ENCODE measurements at regions of chr11 and their contacts with region 1.

Region 1: GRCh38 chr11:46346886-46347636 is at the start of gene DGKZ:
- DNase-seq: peak; percentile 99
- ATAC-seq: peak; percentile 93
- H3K4me3 Mint-ChIP-seq: peak within 1 kb of the TSS; percentile 90
- H3K27ac Mint-ChIP-seq: peak within 1 kb of the TSS; percentile 83
- H3K4me1 Mint-ChIP-seq: peaks cover 52% of the 10 kb centered on the region
- H3K27me3 Mint-ChIP-seq: no peaks in the 10 kb centered on the region
- CTCF ChIP-seq: no peak
- total RNA-seq, gene DGKZ: 48.1 and 53.6 TPM in 2 replicates

Region 2: GRCh38 chr11:46121724-46122477 is 225.2 kb before region 1 on chr11:
- CTCF ChIA-PET with region 1: no interaction called
- POLR2A ChIA-PET with region 1: no interaction called
- intact Hi-C with region 1: loop called (anchors 2 kb)
- DNase-seq: no peak
- ATAC-seq: peak; percentile 47
- H3K4me3 Mint-ChIP-seq: peak overlapping the region; percentile 87
- H3K27ac Mint-ChIP-seq: peak overlapping the region; percentile 91
- H3K4me1 Mint-ChIP-seq: peaks cover 30% of the 10 kb centered on the region
- H3K27me3 Mint-ChIP-seq: no peaks in the 10 kb centered on the region
- CTCF ChIP-seq: no peak

Region 3: GRCh38 chr11:46315033-46315738 is 31.9 kb before region 1 on chr11:
- CTCF ChIA-PET with region 1: interaction called, 6 read pairs
- POLR2A ChIA-PET with region 1: interaction called, 3 read pairs
- intact Hi-C with region 1: loop called (anchors 1 kb)
- DNase-seq: peak; percentile 48
- ATAC-seq: peak; percentile 67
- H3K4me3 Mint-ChIP-seq: no peak overlapping the region
- H3K27ac Mint-ChIP-seq: no peak overlapping the region
- H3K4me1 Mint-ChIP-seq: peaks cover 15% of the 10 kb centered on the region
- H3K27me3 Mint-ChIP-seq: peaks cover 11% of the 10 kb centered on the region
- CTCF ChIP-seq: peak; percentile 82

Region 4: GRCh38 chr11:46380340-46381047 is 33.4 kb after region 1 on chr11:
- CTCF ChIA-PET with region 1: no interaction called
- POLR2A ChIA-PET with region 1: no interaction called
- intact Hi-C with region 1: loop called (anchors 5 kb)
- DNase-seq: no peak
- ATAC-seq: peak; percentile 44
- H3K4me3 Mint-ChIP-seq: peak overlapping the region; percentile 80
- H3K27ac Mint-ChIP-seq: no peak overlapping the region
- H3K4me1 Mint-ChIP-seq: peaks cover 8% of the 10 kb centered on the region
- H3K27me3 Mint-ChIP-seq: peaks cover 24% of the 10 kb centered on the region
- CTCF ChIP-seq: no peak

Region 5: DNA sequence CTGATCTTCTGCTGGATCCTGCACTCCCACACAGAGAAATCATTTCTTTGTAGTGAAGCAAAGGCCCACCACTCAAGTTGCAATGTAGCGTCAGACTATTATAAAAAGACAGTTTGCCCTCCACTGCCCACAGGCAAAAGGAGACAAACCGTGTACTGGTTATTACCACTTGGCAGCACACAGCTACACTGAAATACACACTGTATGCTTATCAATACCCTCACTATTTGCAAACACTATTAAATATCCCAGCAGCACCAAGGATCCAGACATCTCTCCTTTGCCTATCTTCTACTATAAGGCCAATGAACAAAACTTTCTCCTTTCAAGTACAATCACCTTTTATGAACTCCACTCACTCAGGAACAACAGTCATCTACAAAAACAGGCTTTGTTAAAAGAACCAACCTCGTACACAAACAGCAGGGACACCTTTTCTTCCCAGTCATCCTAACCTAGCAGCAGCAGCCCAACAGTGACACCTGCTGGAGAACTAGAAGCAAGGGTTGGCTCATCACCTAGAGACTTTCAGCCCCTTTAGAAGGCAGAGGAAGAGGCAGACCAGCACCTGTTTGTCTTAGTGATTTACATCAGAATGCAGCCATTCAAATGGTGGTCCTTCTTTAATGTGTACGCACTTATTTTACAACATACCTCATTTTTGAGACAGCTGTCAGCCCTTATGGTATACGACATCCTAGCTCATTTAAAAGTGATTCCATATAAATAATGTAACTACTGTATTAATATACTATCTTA is 190.7 kb after region 1 on chr11:
- CTCF ChIA-PET with region 1: no interaction called
- POLR2A ChIA-PET with region 1: no interaction called
- intact Hi-C with region 1: loop called (anchors 5 kb)
- DNase-seq: no peak
- ATAC-seq: peak; percentile 68
- H3K4me3 Mint-ChIP-seq: no peak overlapping the region
- H3K27ac Mint-ChIP-seq: no peak overlapping the region
- H3K4me1 Mint-ChIP-seq: peaks cover 13% of the 10 kb centered on the region
- H3K27me3 Mint-ChIP-seq: no peaks in the 10 kb centered on the region
- CTCF ChIP-seq: no peak

Measured in activated B cell treated with CpG ODN at 0.5 μM for 24 hours (primary cell).